GM10248 (cell line): ENCODE measurements at regions of chr1 and their contacts with region 1.

Region 1: GRCh38 chr1:201361652-201362504 is 15.6 kb downstream of the TNNT2 start:
- DNase-seq: peak; percentile 82
- CTCF ChIP-seq: peak; percentile 71

Region 2: DNA sequence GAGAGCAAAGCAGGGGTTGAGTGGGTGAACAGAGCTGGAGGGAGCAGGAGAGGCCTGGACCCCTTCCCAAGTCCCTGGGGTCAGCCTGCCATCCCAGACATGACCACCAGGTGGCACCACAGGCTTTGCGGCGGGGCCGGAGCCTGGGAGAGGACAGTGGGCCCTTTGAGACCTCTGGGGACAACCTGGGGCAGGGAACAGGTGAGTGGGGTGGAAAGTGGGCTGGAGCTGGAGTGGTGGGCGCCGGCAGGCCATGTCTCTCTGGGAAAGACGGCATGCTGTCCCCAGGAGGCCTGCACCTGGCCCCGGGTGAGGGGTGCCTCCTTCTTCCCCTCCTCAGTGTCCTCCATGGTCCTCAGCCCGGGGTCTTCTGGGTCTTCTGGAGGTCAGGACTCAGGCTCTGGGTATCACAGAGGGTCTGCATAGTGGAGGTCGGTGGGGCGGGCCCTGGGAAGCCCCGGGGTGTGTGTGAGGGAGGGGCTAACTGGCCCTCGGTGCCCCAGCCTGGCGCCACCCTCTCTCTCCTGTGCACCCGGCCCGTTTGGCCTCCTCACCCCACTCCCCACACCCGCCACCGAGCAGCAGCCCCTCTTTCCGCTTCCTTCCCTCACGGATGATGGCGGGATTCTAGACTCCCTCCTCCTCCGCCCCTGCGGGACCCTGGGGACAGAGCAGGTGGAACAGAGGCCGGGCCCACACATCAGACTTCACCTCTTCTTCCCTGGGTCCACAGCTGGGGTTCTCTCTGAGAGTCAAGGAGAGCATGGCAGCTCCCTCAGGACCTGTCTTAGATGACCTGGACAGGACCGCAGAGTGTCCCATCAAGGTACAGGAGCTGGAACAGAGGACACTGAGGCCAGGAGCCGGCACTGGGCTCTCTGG is 107.0 kb before region 1 on chr1:
- CTCF ChIA-PET with region 1: interaction called, 40 read pairs
- POLR2A ChIA-PET with region 1: no interaction called
- DNase-seq: peak; percentile 89
- CTCF ChIP-seq: peak; percentile 94

Region 3: DNA sequence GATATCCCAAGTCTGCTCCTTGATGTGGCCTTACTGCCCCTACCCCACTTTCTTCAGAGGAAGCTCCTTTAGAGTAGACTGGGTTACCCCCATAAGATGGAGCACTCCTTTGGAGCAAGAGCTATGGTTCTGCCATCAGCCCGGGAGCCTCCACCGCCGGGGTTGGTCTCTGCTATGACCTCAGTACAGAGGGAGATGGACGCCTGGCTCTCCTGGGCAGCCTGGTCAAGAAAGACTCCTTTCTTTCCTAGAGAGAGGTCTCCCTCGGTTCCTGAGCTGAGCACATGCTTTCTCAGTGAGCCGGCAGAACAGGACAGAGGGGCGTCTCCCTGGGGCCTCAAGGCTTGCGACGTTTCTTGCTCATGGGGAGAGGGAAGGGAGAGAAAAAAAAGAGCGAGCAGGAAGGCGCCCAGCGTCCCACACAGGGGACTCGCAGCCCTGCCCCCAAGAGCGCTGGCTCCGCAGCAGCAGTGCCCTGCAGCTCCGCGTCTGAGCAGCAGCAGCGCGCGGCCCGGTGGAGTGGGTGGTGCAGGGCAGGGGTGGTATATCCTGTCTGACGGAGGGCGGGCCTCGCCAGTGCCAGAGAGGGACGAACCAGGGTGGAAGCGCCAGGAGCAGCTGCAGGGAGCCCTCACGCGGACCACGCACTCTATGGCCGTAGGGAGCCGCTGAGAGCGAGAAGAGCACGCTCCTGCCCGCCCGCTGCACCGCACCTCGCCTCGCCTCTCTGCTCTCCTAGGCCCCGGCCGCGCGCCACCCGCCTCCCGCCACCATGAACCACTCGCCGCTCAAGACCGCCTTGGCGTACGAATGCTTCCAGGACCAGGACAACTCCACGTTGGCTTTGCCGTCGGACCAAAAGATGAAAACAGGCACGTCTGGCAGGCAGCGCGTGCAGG is 78.7 kb before region 1 on chr1 and contains the start of gene PKP1:
- CTCF ChIA-PET with region 1: no interaction called
- POLR2A ChIA-PET with region 1: no interaction called
- DNase-seq: no peak
- CTCF ChIP-seq: no peak

Region 4: DNA sequence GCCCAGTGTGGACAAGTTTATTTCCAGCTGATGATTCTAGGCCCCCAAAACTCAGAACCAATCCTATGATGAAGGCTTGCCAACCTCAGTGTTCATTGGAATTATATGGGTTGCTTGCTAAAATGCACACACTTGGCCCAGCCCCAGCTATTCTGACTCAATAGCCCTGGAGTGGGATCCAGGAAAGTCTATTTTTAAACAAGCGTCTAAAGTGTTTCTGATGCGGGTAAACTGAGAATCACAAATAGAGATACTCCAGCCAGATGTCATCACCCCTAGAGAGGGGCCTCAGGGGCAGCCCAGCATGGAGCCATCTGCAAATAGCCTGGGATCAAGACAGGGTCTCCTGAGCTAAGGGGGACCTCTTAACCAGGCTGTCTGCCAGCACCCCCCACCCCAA is 32.6 kb before region 1 on chr1:
- CTCF ChIA-PET with region 1: interaction called, 14 read pairs
- POLR2A ChIA-PET with region 1: no interaction called
- DNase-seq: no peak
- CTCF ChIP-seq: no peak

Region 5: DNA sequence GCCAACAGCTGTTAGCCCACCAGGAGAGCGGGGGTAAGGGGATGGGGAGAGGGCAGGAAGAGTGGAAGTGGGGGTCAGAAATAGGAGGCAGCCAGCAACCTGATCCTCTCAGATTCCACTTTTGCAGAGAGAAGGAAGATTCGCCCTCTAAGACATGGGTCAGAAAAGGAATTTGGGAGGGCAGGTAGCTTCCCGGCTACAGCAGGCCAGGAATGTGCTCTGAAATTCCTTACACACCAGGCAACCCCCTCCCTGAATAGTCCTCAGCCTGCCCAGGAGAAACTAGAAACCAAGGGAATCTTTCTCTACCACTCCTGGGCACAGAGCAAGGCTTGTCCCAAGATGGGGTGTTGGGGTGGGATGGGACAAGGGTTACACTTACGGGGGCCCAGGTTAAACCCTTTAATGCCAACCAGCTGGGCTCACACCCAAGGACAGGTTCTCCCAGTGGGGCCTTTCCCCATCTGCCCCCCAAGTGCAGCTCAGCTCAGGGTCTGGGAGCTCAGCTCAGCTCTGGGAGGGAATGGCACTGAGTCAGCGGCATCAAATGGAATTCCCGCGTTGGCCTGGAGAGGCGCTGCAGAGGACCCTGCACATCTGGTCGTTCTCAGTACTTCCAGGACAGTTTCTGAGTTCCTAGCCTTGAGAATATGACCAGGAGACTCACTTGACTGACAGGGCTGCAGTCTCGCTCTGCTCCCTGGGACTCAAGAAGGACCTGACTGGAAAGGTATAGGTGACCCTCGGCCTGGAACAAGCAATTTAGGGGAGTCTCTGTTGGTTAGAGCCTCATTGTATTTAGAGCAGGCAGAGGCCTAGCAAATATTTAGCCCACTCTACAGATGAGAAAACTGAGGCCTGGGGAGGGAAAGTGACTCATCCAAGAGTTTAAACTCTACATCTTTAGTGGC is 14.8 kb after region 1 on chr1:
- CTCF ChIA-PET with region 1: interaction called, 18 read pairs
- POLR2A ChIA-PET with region 1: no interaction called
- DNase-seq: peak; percentile 72
- CTCF ChIP-seq: peak; percentile 25

Region 6: DNA sequence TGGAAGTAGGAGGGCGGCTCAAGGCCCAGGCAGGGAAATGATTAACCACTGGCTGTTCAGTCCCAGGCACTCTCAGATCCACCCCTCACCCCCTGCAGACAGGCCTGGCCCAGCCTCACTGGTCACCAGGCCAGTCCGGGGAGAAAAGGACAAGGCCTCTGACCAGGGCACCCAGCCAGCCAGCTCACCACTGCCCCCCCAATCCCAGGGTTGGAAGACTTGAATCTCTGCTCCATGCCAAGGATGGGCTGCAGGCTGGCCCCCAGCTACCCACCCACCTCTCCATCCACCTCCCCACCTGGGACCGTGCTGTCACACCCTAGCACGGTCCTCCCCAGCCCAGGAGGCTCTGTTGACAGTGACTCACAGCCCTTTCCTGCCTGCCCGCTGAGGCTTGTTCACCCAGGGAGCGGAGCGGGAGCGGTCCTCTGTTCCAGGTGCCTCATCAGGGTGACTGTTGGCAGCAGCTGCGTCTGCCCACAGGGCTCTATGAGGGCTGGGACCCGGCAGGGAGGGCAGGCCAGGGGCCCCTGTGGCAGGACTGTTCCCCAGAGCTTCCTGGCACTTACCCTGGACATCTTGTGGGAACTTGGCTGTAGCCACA is 35.1 kb after region 1 on chr1:
- CTCF ChIA-PET with region 1: interaction called, 10 read pairs
- POLR2A ChIA-PET with region 1: no interaction called
- DNase-seq: no peak
- CTCF ChIP-seq: no peak